GM12878 (cell line): ENCODE measurements at regions of chr11 and their contacts with region 1.

Region 1: DNA sequence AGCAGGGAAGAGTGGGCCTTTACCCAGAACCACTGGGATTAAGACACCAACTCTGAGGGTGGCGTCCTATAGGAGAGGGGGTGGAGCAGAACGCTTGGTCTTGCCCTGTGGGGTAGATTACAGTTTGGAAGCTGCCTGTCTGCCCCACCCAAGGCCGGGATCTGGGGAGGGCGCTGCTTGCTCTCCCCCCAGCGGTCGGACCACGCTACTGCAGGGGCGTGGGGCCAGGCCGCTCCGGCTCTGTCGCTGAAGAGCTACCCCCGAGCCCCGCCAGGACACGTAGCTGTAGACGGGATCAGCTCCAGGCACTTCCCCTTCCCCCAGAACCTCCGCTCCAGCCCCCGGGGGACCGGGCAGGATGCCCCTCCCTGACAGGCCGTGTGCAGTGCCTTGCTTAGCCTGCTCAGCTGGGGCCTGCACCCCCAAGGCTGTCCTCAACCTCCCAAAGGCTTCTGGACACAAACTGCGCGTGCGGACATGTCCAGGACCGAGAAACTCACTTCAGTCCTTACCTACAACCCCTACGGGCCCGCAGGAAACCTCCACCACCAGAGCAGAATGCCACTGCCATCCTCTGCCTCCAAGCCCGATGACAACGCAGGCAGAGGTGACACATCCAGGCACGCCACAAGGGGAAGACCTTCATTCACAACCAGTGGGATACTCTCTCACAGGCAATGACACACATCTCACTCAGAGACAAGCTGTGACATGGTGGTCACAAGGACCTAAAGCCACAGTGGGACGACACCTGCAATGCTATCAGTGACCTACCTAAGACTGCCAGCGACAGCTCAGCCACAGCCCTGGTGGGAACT is 3.6 kb downstream of the AHNAK start:
- DNase-seq: peak; percentile 51
- ATAC-seq: peak; percentile 48
- H3K4me3 ChIP-seq: peak overlapping the region; percentile 84
- H3K27ac ChIP-seq: peak overlapping the region; percentile 95
- H3K4me1 ChIP-seq: peaks cover 77% of the 10 kb centered on the region
- H3K27me3 ChIP-seq: no peaks in the 10 kb centered on the region; a peak in 2 of 4 replicates
- CTCF ChIP-seq: peak; percentile 97 to 99 (median 97)
- EP300 ChIP-seq: no peak
- POLR2A ChIP-seq: no peak
- RAD21 ChIP-seq: peak; percentile 81

Region 2: DNA sequence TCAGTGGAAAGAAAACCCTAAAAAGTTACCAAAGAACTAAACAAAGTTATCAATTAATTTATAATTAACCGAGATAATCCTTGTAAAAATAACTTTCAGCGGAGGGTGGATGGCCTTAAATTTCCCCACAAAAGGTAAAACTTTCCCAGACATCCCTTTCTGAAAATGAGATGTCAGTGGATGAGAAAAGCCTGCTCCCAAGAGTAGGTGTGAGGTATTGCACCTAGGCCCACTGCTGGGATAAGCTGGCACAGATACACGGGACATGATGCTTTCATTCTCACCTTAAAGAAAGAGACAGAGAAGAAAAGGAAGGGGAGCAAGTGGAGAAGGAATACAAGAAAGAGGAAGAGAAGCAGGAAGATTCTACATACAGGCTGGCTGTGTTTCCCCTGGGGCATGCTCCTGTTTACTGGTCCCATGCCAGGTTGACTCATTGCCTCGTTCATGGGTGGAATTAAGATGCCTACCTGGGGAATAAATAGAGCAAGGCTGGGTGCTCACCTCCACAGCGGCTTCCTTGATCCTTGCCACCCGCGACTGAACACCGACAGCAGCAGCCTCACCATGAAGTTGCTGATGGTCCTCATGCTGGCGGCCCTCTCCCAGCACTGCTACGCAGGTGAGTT is 273.2 kb before region 1 on chr11 and contains the start of gene SCGB2A2:
- CTCF ChIA-PET with region 1: no interaction called
- POLR2A ChIA-PET with region 1: no interaction called
- RAD21 ChIA-PET with region 1: no interaction called
- SMC1A ChIA-PET with region 1: no interaction called
- in situ Hi-C with region 1: no loop called
- intact Hi-C with region 1: no loop called
- DNase-seq: no peak
- ATAC-seq: no peak; the same call in 2 of the 3 replicates
- H3K4me3 ChIP-seq: no peak within 1 kb of the TSS
- H3K27ac ChIP-seq: no peak within 1 kb of the TSS
- H3K4me1 ChIP-seq: no peaks in the 10 kb centered on the region
- H3K27me3 ChIP-seq: no peaks in the 10 kb centered on the region; a peak in 1 of 4 replicates
- CTCF ChIP-seq: peak; percentile 5 to 31 (median 23); a peak in 2 of 6 replicates
- EP300 ChIP-seq: no peak
- POLR2A ChIP-seq: no peak
- RAD21 ChIP-seq: no peak
- polyA plus RNA-seq, gene SCGB2A2: not detected

Region 3: GRCh38 chr11:62394825-62395538 is 148.0 kb before region 1 on chr11:
- CTCF ChIA-PET with region 1: interaction called, 30 read pairs
- POLR2A ChIA-PET with region 1: no interaction called
- RAD21 ChIA-PET with region 1: interaction called, 29 read pairs
- SMC1A ChIA-PET with region 1: interaction called, 11 read pairs
- in situ Hi-C with region 1: no loop called
- intact Hi-C with region 1: no loop called
- DNase-seq: peak; percentile 28
- ATAC-seq: peak; percentile 97
- H3K4me3 ChIP-seq: no peak overlapping the region
- H3K27ac ChIP-seq: no peak overlapping the region
- H3K4me1 ChIP-seq: no peaks in the 10 kb centered on the region
- H3K27me3 ChIP-seq: no peaks in the 10 kb centered on the region
- CTCF ChIP-seq: peak; percentile 51 to 82 (median 68); a peak in 5 of 6 replicates
- EP300 ChIP-seq: no peak
- POLR2A ChIP-seq: no peak
- RAD21 ChIP-seq: peak; percentile 86

Region 4: DNA sequence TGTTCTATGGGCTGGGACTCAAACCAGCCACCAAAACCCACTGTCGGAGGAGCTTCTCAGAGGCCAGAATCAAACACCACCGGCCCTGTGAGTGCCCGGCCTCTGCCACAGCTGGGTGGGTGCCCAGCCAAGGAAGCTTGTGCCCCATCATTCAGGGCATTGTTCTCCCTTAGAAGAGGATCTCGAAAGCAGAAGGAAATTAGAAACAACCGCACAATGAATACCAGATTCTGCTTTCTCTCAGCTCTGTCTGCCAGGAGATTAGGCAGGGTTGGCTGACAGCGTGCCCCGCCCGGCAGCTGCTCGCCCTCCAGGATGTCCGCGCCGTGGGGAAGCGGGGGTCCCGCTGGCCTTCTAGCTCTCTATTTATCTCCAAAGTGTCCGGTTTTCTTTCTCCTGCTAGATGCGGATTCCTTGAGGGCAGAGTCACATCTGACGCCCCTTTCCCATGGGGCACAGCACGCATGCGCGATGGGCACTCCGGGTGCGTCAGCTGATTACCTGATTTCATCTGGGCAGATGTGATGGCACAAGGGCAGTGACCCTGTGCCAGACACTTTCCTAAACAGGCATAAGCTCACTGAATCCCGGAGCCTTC is 98.6 kb before region 1 on chr11:
- CTCF ChIA-PET with region 1: interaction called, 17 read pairs
- POLR2A ChIA-PET with region 1: interaction called, 5 read pairs
- RAD21 ChIA-PET with region 1: interaction called, 6 read pairs
- SMC1A ChIA-PET with region 1: interaction called, 3 read pairs
- in situ Hi-C with region 1: no loop called
- intact Hi-C with region 1: loop called (anchors 5 kb)
- DNase-seq: peak; percentile 16
- ATAC-seq: peak; percentile 83
- H3K4me3 ChIP-seq: peak overlapping the region; percentile 37; the same call in 1 of the 2 replicates
- H3K27ac ChIP-seq: no peak overlapping the region
- H3K4me1 ChIP-seq: no peaks in the 10 kb centered on the region
- H3K27me3 ChIP-seq: peaks cover 0 to 3% of the 10 kb centered on the region in 2 experiments; a peak in 1 of 4 replicates
- CTCF ChIP-seq: no peak
- EP300 ChIP-seq: no peak
- POLR2A ChIP-seq: no peak
- RAD21 ChIP-seq: no peak

Region 5: DNA sequence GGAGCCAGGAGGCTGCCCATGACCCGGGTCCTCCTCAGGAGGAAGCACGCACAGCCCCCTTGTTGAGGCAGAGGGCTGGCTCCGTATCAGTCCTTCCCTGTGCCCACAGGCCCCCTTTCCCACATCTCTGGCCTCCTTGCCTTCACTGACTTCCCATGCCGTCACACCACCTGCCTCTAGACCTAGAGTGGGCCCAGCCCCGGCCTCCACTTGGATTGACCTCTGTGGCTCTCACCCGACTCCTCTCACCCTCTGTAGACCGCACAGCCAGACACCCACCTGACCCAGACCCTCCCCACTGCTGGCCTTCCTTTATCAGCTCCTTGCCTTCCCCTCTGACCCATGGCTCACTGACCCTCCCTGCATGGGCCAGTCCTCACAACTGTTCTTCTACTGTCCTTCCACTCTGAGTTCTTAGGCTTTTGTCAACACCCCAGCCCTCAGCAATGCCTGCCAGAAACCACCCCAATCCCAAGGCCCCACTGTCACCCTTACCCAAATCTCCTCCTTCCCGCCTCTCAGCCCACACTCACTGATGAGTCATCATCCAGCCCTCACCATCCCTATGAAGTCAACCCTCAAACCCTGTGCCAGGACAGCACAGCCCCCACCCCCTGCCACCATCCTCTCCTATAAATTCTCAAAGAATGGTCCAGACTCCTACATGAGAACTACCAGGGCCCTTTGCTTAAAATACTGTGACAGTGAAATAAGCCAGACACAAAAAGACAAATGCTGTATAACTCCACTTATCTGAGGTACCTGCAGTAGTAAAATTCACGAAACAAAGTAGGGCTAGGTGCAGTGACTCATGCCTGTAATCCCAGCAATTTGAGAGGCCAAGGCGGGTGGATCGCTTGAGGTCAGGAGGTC is 70.7 kb before region 1 on chr11:
- CTCF ChIA-PET with region 1: interaction called, 10 read pairs
- POLR2A ChIA-PET with region 1: no interaction called
- RAD21 ChIA-PET with region 1: interaction called, 6 read pairs
- SMC1A ChIA-PET with region 1: interaction called, 8 read pairs
- in situ Hi-C with region 1: no loop called
- intact Hi-C with region 1: no loop called
- DNase-seq: no peak
- ATAC-seq: no peak
- H3K4me3 ChIP-seq: no peak overlapping the region
- H3K27ac ChIP-seq: no peak overlapping the region
- H3K4me1 ChIP-seq: no peaks in the 10 kb centered on the region
- H3K27me3 ChIP-seq: no peaks in the 10 kb centered on the region; a peak in 1 of 4 replicates
- CTCF ChIP-seq: no peak
- EP300 ChIP-seq: no peak
- POLR2A ChIP-seq: no peak
- RAD21 ChIP-seq: no peak

Region 6: DNA sequence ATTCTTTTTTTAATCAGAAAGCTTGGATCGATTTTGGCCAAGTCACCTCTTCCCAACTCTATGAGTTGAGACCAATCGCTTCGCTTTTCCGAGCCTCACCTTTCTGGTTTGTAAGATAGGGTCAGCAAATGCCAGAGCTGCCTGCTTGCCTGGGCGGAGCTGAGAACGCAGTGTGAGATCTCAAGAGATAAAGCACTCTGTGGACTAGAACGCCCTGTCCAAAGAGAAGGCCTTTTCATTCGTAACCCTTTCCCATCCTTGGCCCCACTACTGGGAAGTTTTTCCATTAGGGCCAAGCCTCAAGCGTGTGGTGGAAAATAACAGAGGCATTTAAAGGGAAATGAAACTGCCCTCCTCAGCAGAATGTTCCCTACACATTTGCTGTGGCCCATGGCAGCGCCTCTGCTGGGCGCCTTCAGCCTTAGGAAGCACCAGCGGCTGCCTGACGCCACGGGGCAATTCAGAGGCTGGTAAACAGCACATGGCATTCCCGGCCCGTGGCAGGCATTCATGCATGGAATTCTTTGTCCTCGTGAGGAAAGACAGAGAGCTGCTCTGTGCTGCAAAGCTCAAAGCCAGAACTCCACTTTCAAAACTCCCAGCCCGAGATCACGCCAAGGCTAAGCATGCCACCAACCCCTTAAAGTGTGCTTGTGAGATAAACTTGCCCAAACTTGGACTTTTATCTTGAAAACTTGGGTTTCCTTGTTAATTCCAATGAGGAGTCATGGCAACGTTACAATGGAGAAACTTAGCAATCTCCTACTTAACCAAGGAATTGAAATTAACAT is 34.5 kb before region 1 on chr11:
- CTCF ChIA-PET with region 1: interaction called, 9 read pairs
- POLR2A ChIA-PET with region 1: no interaction called
- RAD21 ChIA-PET with region 1: interaction called, 10 read pairs
- SMC1A ChIA-PET with region 1: interaction called, 14 read pairs
- in situ Hi-C with region 1: no loop called
- intact Hi-C with region 1: no loop called
- DNase-seq: no peak
- ATAC-seq: peak; percentile 85
- H3K4me3 ChIP-seq: no peak overlapping the region
- H3K27ac ChIP-seq: no peak overlapping the region
- H3K4me1 ChIP-seq: no peaks in the 10 kb centered on the region
- H3K27me3 ChIP-seq: peaks cover 0 to 2% of the 10 kb centered on the region in 2 experiments; a peak in 1 of 4 replicates
- CTCF ChIP-seq: peak; percentile 31 to 53 (median 34); a peak in 5 of 6 replicates
- EP300 ChIP-seq: no peak
- POLR2A ChIP-seq: no peak
- RAD21 ChIP-seq: no peak

Region 7: GRCh38 chr11:62567018-62567633 is 24.2 kb after region 1 on chr11:
- CTCF ChIA-PET with region 1: interaction called, 246 read pairs
- POLR2A ChIA-PET with region 1: interaction called, 4 read pairs
- RAD21 ChIA-PET with region 1: interaction called, 313 read pairs
- SMC1A ChIA-PET with region 1: interaction called, 9 read pairs
- in situ Hi-C with region 1: no loop called
- intact Hi-C with region 1: no loop called
- DNase-seq: no peak
- ATAC-seq: peak; percentile 79
- H3K4me3 ChIP-seq: no peak overlapping the region
- H3K27ac ChIP-seq: peak overlapping the region; percentile 8
- H3K4me1 ChIP-seq: peaks cover 22% of the 10 kb centered on the region
- H3K27me3 ChIP-seq: no peaks in the 10 kb centered on the region
- CTCF ChIP-seq: no peak
- EP300 ChIP-seq: no peak
- POLR2A ChIP-seq: no peak
- RAD21 ChIP-seq: no peak